ENCODE measurements at regions of chr9 and their contacts with region 1.

Region 1: DNA sequence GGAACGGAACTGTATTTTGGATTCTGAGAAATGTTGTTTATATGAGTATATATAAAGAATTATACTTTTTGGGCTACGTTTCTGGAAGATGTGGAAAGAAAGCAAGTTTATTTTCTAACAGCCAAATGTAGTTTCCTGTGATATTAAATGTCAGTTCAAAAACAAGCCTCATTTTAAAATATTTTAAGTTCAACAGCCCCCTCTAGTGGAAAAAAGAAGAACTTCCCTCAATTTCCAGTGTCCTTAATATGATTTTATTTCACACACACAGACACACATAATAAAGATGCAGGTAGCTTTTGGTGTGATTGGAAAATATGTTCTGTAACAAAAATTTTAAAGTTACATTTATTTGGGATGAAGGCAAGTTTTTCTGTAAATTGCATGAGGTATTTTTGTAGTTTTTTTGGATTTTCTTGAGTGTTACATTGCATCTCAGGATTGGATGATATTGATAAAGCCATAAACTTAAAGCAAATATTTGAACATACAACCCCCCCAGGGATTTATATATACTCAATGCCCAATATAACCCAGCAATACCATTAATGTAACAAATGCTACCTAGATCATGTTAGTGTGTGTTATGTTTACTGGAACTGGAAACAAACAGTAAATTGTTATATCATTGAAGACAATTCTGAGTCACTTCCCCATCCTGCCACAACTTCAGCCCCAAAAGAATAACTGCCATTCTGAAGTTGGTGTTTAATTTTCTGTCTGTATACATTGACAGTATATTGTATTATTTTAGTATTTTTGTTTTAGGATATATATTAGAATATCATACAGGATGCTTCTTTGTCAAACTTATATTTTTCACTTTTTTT is 54.0 kb downstream of the CCDC171 start:
- DNase-seq: peak; percentile 51
- H3K4me3 Mint-ChIP-seq: no peak overlapping the region
- H3K27ac Mint-ChIP-seq: no peak overlapping the region
- H3K4me1 Mint-ChIP-seq: no peaks in the 10 kb centered on the region
- H3K27me3 Mint-ChIP-seq: no peaks in the 10 kb centered on the region
- CTCF ChIP-seq: peak; percentile 43

Region 2: GRCh38 chr9:15211160-15211814 is 395.6 kb before region 1 on chr9:
- CTCF ChIA-PET with region 1: interaction called, 5 read pairs
- POLR2A ChIA-PET with region 1: no interaction called
- intact Hi-C with region 1: loop called (anchors 2 kb)
- DNase-seq: peak; percentile 70
- H3K4me3 Mint-ChIP-seq: no peak overlapping the region
- H3K27ac Mint-ChIP-seq: no peak overlapping the region
- H3K4me1 Mint-ChIP-seq: no peaks in the 10 kb centered on the region
- H3K27me3 Mint-ChIP-seq: no peaks in the 10 kb centered on the region
- CTCF ChIP-seq: peak; percentile 63

Region 3: DNA sequence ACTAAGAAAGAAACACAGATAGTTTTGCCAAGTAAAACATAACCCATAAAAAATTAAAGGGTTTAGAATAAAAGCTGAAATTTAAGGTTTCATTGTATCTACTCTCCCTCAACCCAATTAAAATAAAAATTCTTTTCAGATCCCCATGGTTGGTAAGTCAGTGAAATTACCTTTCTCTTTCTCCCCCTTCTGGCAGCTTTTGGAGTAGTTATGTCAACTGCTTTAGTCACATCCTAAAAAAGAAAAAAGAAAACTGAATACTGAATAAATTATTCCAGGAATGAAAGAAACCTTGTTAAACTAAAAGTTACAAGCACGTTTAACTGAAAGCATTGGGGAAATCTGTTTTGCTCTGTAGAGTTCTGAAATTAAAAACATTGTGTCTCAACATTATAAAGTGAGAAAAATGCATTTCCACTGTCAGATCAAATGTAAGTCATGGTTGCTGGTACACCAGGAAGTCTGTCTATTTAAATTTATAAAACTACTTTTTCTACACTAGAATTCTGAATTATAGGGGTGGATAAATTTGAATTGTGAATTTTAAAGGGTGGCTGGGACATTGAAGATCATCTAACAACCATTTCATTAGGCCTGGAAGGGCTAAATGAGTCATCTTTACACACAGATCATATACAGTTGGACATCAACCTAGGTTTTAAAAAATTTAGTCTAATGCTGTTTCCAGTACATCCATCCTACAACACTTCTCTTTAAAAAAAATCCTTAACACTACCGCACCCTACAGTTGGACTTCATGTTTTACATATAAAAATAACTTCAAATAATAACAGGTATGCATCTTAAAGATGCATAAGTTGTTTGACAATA is 120.8 kb before region 1 on chr9:
- CTCF ChIA-PET with region 1: interaction called, 3 read pairs
- POLR2A ChIA-PET with region 1: no interaction called
- intact Hi-C with region 1: loop called (anchors 2 kb)
- DNase-seq: peak; percentile 37
- H3K4me3 Mint-ChIP-seq: no peak overlapping the region
- H3K27ac Mint-ChIP-seq: no peak overlapping the region
- H3K4me1 Mint-ChIP-seq: no peaks in the 10 kb centered on the region
- H3K27me3 Mint-ChIP-seq: no peaks in the 10 kb centered on the region
- CTCF ChIP-seq: peak; percentile 26

Region 4: GRCh38 chr9:15552636-15553527 is 54.0 kb before region 1 on chr9 and contains the start of gene CCDC171:
- CTCF ChIA-PET with region 1: interaction called, 15 read pairs
- POLR2A ChIA-PET with region 1: interaction called, 10 read pairs
- intact Hi-C with region 1: loop called (anchors 2 kb)
- DNase-seq: peak; percentile 95
- H3K4me3 Mint-ChIP-seq: peak within 1 kb of the TSS; percentile 88
- H3K27ac Mint-ChIP-seq: peak within 1 kb of the TSS; percentile 52
- H3K4me1 Mint-ChIP-seq: no peaks in the 10 kb centered on the region
- H3K27me3 Mint-ChIP-seq: no peaks in the 10 kb centered on the region
- CTCF ChIP-seq: no peak
- total RNA-seq, gene CCDC171: 1.7 and 1.8 TPM in 2 replicates

Region 5: GRCh38 chr9:15642369-15642962 is 35.6 kb after region 1 on chr9:
- CTCF ChIA-PET with region 1: interaction called, 10 read pairs
- POLR2A ChIA-PET with region 1: no interaction called
- intact Hi-C with region 1: no loop called
- DNase-seq: peak; percentile 51
- H3K4me3 Mint-ChIP-seq: no peak overlapping the region
- H3K27ac Mint-ChIP-seq: no peak overlapping the region
- H3K4me1 Mint-ChIP-seq: no peaks in the 10 kb centered on the region
- H3K27me3 Mint-ChIP-seq: no peaks in the 10 kb centered on the region
- CTCF ChIP-seq: peak; percentile 35

Region 6: DNA sequence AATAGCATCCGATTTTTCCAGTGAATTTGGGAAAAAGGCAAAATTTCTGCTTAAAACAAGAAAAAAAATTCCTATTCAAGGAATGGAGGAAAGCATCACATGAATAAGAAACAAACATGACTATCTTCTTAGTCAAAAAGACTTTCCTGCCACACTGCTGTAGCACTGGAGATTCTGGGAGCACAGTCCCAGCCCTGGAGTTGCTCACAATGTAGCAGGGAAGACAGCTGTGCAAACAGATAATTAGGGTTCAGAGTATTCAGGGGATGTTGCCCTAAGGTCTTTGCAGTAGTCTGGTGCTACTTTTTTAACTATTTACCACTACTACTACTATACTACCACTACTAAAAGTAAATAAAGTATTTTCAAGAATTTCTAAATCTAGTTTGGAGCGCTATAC is 1177.1 kb after region 1 on chr9:
- CTCF ChIA-PET with region 1: no interaction called
- POLR2A ChIA-PET with region 1: no interaction called
- intact Hi-C with region 1: no loop called
- DNase-seq: no peak
- H3K4me3 Mint-ChIP-seq: no peak overlapping the region
- H3K27ac Mint-ChIP-seq: no peak overlapping the region
- H3K4me1 Mint-ChIP-seq: no peaks in the 10 kb centered on the region
- H3K27me3 Mint-ChIP-seq: peaks cover 18% of the 10 kb centered on the region
- CTCF ChIP-seq: no peak

Measured in MCF 10A (cell line).